Mucosa of descending colon (tissue), 3 donors: ENCODE measurements at regions of chrX and their contacts with region 1.

Region 1: GRCh38 chrX:40612511-40612910 is 10.7 kb upstream of the MPC1L start:
- DNase-seq: no peak
- ATAC-seq: no peak
- H3K4me3 ChIP-seq: no peak overlapping the region
- H3K4me1 ChIP-seq: no peaks in the 10 kb centered on the region
- CTCF ChIP-seq: no peak

Region 2: DNA sequence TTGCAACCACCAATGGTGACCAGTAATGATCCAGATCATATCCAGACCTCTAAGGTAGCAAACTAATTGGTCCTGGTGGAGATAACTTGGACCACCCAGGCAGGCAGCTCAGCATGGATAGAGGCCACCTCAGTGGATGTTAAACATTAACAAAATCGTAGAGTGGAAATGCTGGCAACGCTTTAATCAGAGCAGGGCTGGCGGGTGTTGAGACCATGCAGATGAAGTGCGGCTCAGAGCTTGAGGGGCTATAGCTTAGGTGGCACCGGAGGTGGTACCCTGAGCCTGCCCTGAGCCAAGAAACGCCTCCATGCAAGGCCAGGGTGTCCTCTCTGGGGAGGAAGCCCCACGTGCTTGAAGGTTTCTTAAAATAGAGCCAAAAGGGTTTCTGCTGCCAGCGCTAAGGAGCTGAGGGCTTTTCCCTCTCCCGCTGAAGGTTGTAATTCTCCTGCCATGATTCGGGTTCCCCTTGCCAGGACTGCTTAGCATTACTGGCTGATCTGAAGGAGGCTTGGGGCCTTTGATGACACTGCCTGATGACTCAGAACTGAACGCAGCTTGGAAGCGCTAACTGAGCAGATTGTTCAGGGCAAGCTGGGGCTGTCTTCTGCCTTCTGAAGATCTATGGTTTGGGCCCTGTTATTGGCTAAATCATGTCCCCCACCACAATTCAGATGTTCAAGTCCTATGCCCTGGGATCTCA is 209.5 kb before region 1 on chrX:
- intact Hi-C with region 1: no loop called
- DNase-seq: peak in 1 of 3 donors; percentile 19
- ATAC-seq: peak; percentile 67
- H3K4me3 ChIP-seq: no peak overlapping the region
- H3K4me1 ChIP-seq: no peaks in the 10 kb centered on the region
- CTCF ChIP-seq: no peak

Region 3: GRCh38 chrX:40622479-40623138 is 10.1 kb after region 1 on chrX:
- intact Hi-C with region 1: loop called in 1 of 2 experiments (anchors 2 kb)
- DNase-seq: peak; percentile 55 to 74 (median 57)
- ATAC-seq: peak; percentile 93
- H3K4me3 ChIP-seq: no peak overlapping the region
- H3K4me1 ChIP-seq: peaks cover 9% of the 10 kb centered on the region
- CTCF ChIP-seq: no peak